Caco-2 (cell line): ENCODE measurements at regions of chr15 and their contacts with region 1.

Region 1: DNA sequence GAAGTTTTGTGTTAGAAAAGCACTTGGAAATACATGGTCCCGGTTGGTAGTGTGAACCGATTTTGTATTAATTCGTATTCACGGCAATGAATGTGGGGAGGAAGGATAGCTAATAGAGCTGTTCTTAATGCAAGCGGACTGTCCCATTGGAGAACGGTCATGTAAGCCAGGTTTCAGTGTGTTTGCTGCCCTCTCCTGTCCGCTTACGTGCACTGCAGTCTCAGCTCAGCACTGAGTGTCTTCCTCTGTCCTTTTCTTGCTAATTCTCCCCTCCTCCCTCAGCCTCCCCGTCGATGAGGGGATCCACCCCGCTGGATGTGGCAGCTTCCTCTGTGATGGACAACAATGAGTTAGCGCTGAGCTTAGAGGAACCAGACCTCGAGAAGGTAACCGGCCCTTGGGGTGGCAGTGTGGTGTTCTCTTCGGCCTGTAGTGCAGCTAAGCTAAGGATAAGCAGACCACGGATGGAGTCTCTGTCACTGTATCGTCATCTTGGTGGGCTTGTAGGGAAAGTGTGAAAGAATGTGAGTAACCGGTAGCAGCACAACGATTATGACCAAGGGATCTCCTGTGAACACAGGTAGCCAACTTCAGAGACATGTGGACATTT is 267.5 kb upstream of the CHRM5 start:
- DNase-seq: peak; percentile 69 to 72
- H3K4me3 ChIP-seq: no peak overlapping the region
- H3K4me3 Mint-ChIP-seq: no peak overlapping the region
- H3K27ac Mint-ChIP-seq: no peak overlapping the region
- H3K4me1 ChIP-seq: no peaks in the 10 kb centered on the region
- H3K4me1 Mint-ChIP-seq: no peaks in the 10 kb centered on the region
- H3K27me3 ChIP-seq: no peaks in the 10 kb centered on the region
- H3K27me3 Mint-ChIP-seq: peaks cover 9% of the 10 kb centered on the region
- CTCF ChIP-seq: peak; percentile 86 to 93

Region 2: GRCh38 chr15:33234014-33234461 is 466.8 kb before region 1 on chr15:
- CTCF ChIA-PET with region 1: no interaction called
- POLR2A ChIA-PET with region 1: no interaction called
- intact Hi-C with region 1: loop called (anchors 1 kb)
- DNase-seq: peak in 1 of 2 experiments; percentile 45
- H3K4me3 ChIP-seq: no peak overlapping the region
- H3K4me3 Mint-ChIP-seq: no peak overlapping the region
- H3K27ac Mint-ChIP-seq: no peak overlapping the region
- H3K4me1 ChIP-seq: no peaks in the 10 kb centered on the region
- H3K4me1 Mint-ChIP-seq: no peaks in the 10 kb centered on the region
- H3K27me3 ChIP-seq: no peaks in the 10 kb centered on the region
- H3K27me3 Mint-ChIP-seq: peaks cover 12% of the 10 kb centered on the region
- CTCF ChIP-seq: peak; percentile 50 to 64

Region 3: GRCh38 chr15:33292717-33293307 is 408.0 kb before region 1 on chr15:
- CTCF ChIA-PET with region 1: interaction called, 67 read pairs
- POLR2A ChIA-PET with region 1: no interaction called
- intact Hi-C with region 1: no loop called
- DNase-seq: peak; percentile 50 to 59
- H3K4me3 ChIP-seq: no peak overlapping the region
- H3K4me3 Mint-ChIP-seq: no peak overlapping the region
- H3K27ac Mint-ChIP-seq: no peak overlapping the region
- H3K4me1 ChIP-seq: no peaks in the 10 kb centered on the region
- H3K4me1 Mint-ChIP-seq: no peaks in the 10 kb centered on the region
- H3K27me3 ChIP-seq: no peaks in the 10 kb centered on the region
- H3K27me3 Mint-ChIP-seq: peaks cover 4% of the 10 kb centered on the region
- CTCF ChIP-seq: peak; percentile 60 to 87